GM12878 (cell line): ENCODE measurements at regions of chr7 and their contacts with region 1.

Region 1: DNA sequence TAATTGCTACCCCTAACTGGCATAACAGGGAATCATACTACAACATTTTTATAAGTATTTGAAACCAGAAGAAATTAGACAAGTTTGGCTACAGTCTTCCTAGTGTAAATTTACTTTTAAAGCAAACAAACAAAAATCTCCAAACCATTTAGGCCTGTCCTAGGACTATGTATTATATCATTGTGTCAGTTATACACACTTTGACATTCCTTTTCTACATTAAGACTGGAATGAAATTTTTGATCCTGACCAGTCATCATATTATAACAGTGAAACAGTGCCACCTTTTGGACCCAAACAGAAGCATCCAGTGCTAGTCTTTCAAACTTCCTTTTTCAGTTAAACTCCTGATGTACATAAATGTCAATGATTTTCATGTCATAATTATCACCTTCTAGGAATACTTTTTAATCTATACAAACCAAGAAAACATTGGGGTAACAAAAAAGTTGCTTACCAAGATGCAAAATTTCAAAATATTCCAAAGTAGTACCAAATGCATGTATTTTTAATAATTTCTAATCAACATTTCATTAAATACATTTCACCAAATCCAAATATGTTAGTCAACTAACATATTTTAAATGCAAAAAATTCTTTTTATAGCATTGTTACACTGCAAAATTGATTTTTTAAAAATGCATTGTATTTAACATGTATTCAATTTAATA is 75.7 kb downstream of the IMMP2L start:
- DNase-seq: peak; percentile 13
- ATAC-seq: peak; percentile 72
- H3K4me3 ChIP-seq: no peak overlapping the region
- H3K27ac ChIP-seq: no peak overlapping the region
- H3K4me1 ChIP-seq: no peaks in the 10 kb centered on the region
- H3K27me3 ChIP-seq: no peaks in the 10 kb centered on the region
- CTCF ChIP-seq: peak; percentile 60 to 75 (median 69)
- EP300 ChIP-seq: no peak
- POLR2A ChIP-seq: no peak
- RAD21 ChIP-seq: peak; percentile 83

Region 2: GRCh38 chr7:109844362-109844761 is 1642.2 kb before region 1 on chr7:
- CTCF ChIA-PET with region 1: no interaction called
- POLR2A ChIA-PET with region 1: no interaction called
- RAD21 ChIA-PET with region 1: no interaction called
- SMC1A ChIA-PET with region 1: interaction called, 3 read pairs
- in situ Hi-C with region 1: no loop called
- intact Hi-C with region 1: loop called (anchors 5 kb)
- DNase-seq: no peak
- ATAC-seq: no peak
- H3K4me3 ChIP-seq: no peak overlapping the region
- H3K27ac ChIP-seq: no peak overlapping the region
- H3K4me1 ChIP-seq: no peaks in the 10 kb centered on the region
- H3K27me3 ChIP-seq: no peaks in the 10 kb centered on the region
- CTCF ChIP-seq: peak; percentile 20 to 41 (median 27); a peak in 4 of 6 replicates
- EP300 ChIP-seq: no peak
- POLR2A ChIP-seq: no peak
- RAD21 ChIP-seq: peak; percentile 72

Region 3: DNA sequence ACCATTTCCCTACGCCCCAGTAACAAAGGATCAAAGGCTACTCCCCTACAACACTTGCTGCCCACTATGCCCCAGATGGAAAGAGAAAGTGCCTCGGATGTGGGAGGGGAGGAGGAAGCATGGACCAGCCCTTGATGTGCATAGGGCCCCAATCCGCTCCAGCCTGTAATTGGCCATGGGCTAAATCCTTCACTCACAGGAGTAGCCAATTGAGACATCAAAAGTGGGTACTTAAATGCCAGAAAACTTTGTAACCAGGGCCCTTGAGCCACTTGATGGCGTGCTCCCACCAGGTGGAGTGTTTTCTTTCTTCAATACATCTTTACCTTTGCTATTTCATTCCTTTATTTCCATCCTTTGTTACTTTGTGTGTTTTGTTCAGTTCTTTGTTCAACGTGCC is 896.2 kb before region 1 on chr7:
- CTCF ChIA-PET with region 1: no interaction called
- POLR2A ChIA-PET with region 1: no interaction called
- RAD21 ChIA-PET with region 1: no interaction called
- SMC1A ChIA-PET with region 1: no interaction called
- in situ Hi-C with region 1: no loop called
- intact Hi-C with region 1: loop called (anchors 5 kb)
- DNase-seq: no peak
- ATAC-seq: peak; percentile 78
- H3K4me3 ChIP-seq: no peak overlapping the region
- H3K27ac ChIP-seq: no peak overlapping the region
- H3K4me1 ChIP-seq: no peaks in the 10 kb centered on the region
- H3K27me3 ChIP-seq: no peaks in the 10 kb centered on the region
- CTCF ChIP-seq: peak in 1 of 3 experiments; percentile 30; a peak in 1 of 6 replicates
- EP300 ChIP-seq: no peak
- POLR2A ChIP-seq: no peak
- RAD21 ChIP-seq: 0 out of 2 replicates have a peak, but pooled peaks have one; percentile 8

Region 4: DNA sequence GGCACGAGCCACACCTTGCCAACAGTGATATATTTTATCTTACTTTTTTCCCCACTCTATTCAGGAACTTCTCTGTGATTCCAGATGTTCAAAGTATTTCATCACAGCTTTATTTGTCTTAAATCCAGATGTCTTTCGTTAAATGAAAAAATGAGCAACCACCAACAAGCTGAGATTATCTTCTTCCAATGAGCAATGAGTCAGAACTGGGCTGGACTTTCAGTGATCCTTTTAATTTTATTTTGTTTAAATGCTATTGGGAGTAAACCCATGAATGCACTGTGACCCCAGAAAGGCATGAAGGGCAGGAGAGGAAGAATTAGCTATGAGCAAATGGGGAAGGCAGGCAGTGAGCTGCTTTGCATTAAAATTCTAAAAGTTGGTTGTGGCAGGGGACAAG is 153.3 kb after region 1 on chr7:
- CTCF ChIA-PET with region 1: no interaction called
- POLR2A ChIA-PET with region 1: no interaction called
- RAD21 ChIA-PET with region 1: no interaction called
- SMC1A ChIA-PET with region 1: no interaction called
- in situ Hi-C with region 1: no loop called
- intact Hi-C with region 1: no loop called
- DNase-seq: no peak
- ATAC-seq: no peak
- H3K4me3 ChIP-seq: no peak overlapping the region
- H3K27ac ChIP-seq: no peak overlapping the region
- H3K4me1 ChIP-seq: no peaks in the 10 kb centered on the region
- H3K27me3 ChIP-seq: no peaks in the 10 kb centered on the region
- CTCF ChIP-seq: no peak
- EP300 ChIP-seq: no peak
- POLR2A ChIP-seq: no peak
- RAD21 ChIP-seq: no peak